Activated T-helper 1 cell treated with anti-CD3 and anti-CD28 coated beads, Interleukin-12 subunit alpha, Interleukin-12 subunit beta, Interleukin-2, Interleukin-4 antibody, amounts not matched to agents 30 ng/mL and 10 ng/mL and 1 ng/mL, durations not matched to agents 14 hours and 24 hours and 36 hours (primary cell): ENCODE measurements at regions of chr12 and their contacts with region 1.

Region 1: DNA sequence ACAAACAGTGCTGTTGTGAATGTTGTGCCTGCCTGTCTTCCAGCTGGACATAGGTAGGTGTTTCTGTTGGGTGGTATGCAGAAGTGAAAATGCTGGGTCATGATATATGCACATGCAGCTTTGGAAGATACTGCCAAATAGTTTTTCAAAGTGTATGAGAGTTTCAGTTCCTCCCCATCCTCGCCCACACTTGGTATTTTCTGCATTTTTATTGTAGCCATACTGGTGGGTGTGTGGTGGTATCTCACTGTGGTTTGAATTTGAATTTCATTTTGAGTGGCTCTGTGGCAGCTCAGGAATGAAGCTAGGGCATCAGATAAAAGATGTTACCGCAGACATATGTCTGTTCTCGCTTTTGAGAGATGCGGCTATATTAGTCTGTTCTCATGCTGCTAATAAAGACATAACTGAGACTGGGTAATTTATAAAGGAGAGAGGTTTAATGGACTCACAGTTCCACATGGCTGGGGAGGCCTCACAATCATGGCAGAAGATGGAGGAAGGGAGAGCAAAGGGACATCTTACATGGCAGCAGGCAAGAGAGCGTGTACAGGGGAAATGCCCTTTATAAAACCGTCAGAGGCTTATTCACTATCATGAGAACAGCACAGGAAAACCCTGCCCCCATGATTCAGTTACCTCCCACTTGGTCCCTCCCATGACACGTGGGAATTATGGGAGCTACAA is 183.1 kb downstream of the CAND1 start:
- DNase-seq: no peak
- H3K4me3 Mint-ChIP-seq: peak overlapping the region; percentile 12
- H3K27ac Mint-ChIP-seq: peak overlapping the region; percentile 82
- H3K4me1 Mint-ChIP-seq: peaks cover 47% of the 10 kb centered on the region
- H3K27me3 Mint-ChIP-seq: peaks cover 20% of the 10 kb centered on the region

Region 2: DNA sequence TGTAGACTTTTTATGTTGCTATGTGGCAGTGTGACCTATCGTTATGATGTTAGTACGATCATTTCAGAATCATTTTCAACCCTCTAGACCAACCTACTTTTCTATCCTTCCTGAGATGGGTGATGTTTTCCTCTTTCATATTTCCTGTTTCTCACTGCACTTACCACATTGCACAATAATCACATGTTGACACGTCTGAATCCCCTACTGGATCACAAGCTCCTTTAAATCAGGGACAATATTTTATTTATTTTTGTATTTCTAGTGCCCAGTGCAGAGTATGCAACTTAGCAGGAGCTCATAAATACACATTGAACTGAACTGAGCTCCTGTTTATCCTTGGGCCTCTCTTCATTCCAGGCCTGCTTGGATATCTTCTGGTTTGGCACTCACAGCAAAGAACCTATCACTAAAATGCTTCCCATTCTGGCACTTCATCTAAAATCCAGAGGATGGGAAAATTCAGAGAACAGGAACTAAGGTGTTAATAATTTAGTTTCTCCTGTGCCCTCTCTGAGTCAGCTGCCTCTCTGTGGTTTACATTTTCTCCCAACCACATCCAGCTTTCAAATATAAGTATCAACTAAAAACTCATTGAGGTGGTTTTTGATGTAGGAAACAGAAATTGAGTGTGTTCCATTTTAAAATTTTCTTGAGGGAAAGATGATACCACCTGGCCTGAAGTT is 126.9 kb after region 1 on chr12:
- intact Hi-C with region 1: loop called (anchors 1 kb)
- DNase-seq: peak; percentile 11
- H3K4me3 Mint-ChIP-seq: peak overlapping the region; percentile 30
- H3K27ac Mint-ChIP-seq: peak overlapping the region; percentile 56
- H3K4me1 Mint-ChIP-seq: peaks cover 30% of the 10 kb centered on the region
- H3K27me3 Mint-ChIP-seq: peaks cover 12% of the 10 kb centered on the region

Region 3: GRCh38 chr12:67758119-67758518 is 305.9 kb after region 1 on chr12:
- intact Hi-C with region 1: no loop called
- DNase-seq: no peak
- H3K4me3 Mint-ChIP-seq: no peak overlapping the region
- H3K27ac Mint-ChIP-seq: no peak overlapping the region
- H3K4me1 Mint-ChIP-seq: no peaks in the 10 kb centered on the region
- H3K27me3 Mint-ChIP-seq: no peaks in the 10 kb centered on the region